ENCODE measurements at regions of chr18 and their contacts with region 1.

Region 1: DNA sequence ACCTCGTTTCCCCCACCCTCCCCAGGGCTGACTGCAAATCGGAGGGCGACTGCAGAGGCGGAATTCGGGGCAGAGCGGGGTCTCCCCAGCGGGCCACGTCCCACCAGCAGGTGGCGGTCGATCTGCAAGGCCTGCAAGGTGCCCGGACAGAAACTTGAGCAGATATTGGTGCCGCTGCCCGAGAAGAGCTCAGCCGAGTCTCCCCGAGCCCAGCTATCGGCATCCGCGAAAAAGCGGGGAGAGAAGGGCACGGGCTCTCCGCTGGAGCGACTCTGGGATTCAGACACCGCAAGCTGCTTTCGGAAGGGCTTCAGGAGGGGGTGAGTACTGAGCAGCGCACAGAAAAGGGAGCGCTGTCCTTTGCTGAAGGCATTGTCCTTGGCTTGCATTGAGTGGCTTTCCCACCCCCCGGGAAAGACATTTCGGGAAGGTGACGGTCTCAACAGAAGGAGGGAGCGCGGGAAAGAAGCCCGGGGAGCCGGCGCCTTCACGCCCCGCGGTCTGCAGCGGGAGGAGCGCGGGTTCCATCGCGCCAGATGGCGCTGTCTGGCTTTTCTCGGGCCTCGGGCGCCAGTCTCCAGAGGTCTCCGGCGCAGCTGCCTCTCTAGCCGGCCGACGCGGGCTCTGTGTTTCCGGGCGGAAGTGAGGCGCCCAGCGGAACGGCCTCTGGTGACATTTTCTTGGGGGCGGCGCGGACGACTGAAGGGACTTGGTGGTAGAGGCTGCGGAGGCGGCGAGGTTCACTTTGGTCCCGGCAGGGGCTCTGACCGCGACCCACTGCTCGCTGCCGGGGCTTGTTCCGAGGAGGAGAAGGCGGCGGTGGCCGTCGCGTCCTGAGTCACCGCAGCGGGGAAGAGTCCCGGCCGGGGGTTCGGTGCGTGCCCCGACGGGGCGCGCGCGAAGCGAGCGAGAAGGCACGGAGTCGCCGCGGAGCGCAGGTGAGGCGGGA is 69.5 kb downstream of the HAUS1 start:
- DNase-seq: peak; percentile 88 to 95 (median 90)
- H3K4me3 ChIP-seq: peak overlapping the region; percentile 96
- H3K4me3 Mint-ChIP-seq: peak overlapping the region; percentile 96 to 100 (median 99)
- H3K27ac ChIP-seq: peak overlapping the region; percentile 69
- H3K27ac Mint-ChIP-seq: peak overlapping the region; percentile 96 to 100 (median 97)
- H3K4me1 ChIP-seq: peaks cover 37% of the 10 kb centered on the region
- H3K4me1 Mint-ChIP-seq: peaks cover 30 to 44% (median 39%) of the 10 kb centered on the region in 3 donors
- H3K27me3 ChIP-seq: no peaks in the 10 kb centered on the region
- H3K27me3 Mint-ChIP-seq: peaks cover 0 to 4% of the 10 kb centered on the region in 2 donors

Region 2: DNA sequence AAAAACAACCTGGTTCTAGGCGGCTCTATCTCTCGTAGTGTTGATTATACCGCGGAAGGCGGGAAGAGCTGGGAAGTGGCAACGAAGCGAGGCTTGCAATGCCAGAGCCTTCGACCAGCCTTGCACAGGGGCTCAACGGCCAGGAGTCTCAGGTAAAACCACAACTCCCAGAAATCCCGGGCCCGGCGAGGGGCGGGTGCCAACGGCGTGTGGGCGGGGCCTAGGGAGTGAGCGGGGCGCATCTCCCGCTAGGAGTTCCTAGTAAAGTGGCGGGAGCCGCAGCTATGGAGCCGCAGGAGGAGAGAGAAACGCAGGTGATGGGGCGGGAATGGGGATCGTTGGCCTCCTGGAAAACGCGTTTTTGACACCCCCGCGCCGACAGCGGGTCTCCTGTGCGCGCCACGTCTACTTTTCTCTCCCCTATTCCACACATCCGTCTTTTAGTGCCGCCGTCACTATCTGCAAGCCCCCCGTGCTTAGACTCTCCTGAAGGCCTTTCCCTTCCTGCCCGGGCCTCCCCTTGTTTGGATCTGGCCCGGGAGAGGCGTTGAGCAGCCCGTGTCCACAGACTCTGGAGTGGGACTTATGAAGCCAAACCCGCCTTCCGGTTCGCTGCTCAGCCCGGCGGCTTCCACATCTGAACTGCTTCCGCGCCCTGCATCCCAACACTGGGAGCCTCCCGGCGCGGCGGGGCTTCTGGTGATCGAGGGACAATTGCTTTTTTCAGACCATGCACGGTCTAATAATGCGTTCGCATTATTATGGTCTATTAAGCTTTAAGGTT is 69.3 kb before region 1 on chr18 and contains the start of gene HAUS1:
- CTCF ChIA-PET with region 1: interaction called, 10 read pairs
- POLR2A ChIA-PET with region 1: no interaction called
- DNase-seq: peak; percentile 70 to 85 (median 75)
- H3K4me3 ChIP-seq: peak within 1 kb of the TSS; percentile 89
- H3K4me3 Mint-ChIP-seq: peak within 1 kb of the TSS; percentile 96 to 100 (median 99)
- H3K27ac ChIP-seq: peak within 1 kb of the TSS; percentile 68
- H3K27ac Mint-ChIP-seq: peak within 1 kb of the TSS; percentile 86 to 99 (median 96)
- H3K4me1 ChIP-seq: peaks cover 7% of the 10 kb centered on the region
- H3K4me1 Mint-ChIP-seq: peaks cover 27 to 45% (median 39%) of the 10 kb centered on the region in 3 donors
- H3K27me3 ChIP-seq: no peaks in the 10 kb centered on the region
- H3K27me3 Mint-ChIP-seq: no peaks in the 10 kb centered on the region
- total RNA-seq, gene HAUS1: 52.5 to 53.3 TPM

Region 3: GRCh38 chr18:46155641-46156051 is 18.0 kb before region 1 on chr18:
- CTCF ChIA-PET with region 1: interaction called, 41 read pairs
- POLR2A ChIA-PET with region 1: no interaction called
- DNase-seq: peak in 2 of 5 donors; percentile 30 to 61
- H3K4me3 ChIP-seq: peak overlapping the region; percentile 52
- H3K4me3 Mint-ChIP-seq: peak overlapping the region; percentile 13 to 84 (median 71)
- H3K27ac ChIP-seq: no peak overlapping the region
- H3K27ac Mint-ChIP-seq: peak overlapping the region; percentile 26 to 96 (median 88)
- H3K4me1 ChIP-seq: peaks cover 80% of the 10 kb centered on the region
- H3K4me1 Mint-ChIP-seq: peaks cover 57 to 82% (median 78%) of the 10 kb centered on the region in 3 donors
- H3K27me3 ChIP-seq: no peaks in the 10 kb centered on the region
- H3K27me3 Mint-ChIP-seq: no peaks in the 10 kb centered on the region

Region 4: DNA sequence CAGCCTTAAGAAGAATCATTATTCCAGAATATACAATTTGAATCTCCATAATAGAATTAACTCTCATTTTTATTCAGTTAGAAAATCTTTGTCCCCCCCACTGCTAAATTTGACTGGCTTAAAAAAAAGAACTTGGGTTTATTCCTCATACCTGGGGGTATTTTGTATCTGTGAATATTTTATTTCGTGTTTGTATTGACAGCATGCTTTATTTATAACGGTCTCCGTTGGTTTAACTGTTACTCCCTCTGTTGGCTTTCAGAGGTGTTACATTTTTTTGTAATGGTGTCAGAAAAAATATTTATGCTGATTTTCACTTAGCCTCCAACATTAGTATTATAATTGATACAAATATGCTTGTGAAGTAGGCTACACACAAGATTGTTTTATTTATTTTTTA is 39.6 kb after region 1 on chr18:
- CTCF ChIA-PET with region 1: interaction called, 21 read pairs
- POLR2A ChIA-PET with region 1: no interaction called
- DNase-seq: peak in 2 of 5 donors; percentile 32 to 33
- H3K4me3 ChIP-seq: no peak overlapping the region
- H3K4me3 Mint-ChIP-seq: peak overlapping the region in 4 of 7 donors; percentile 7 to 68 (median 25)
- H3K27ac ChIP-seq: no peak overlapping the region
- H3K27ac Mint-ChIP-seq: peak overlapping the region in 4 of 8 donors; percentile 37 to 64 (median 55)
- H3K4me1 ChIP-seq: peaks cover 25% of the 10 kb centered on the region
- H3K4me1 Mint-ChIP-seq: peaks cover 72 to 95% (median 90%) of the 10 kb centered on the region in 3 donors
- H3K27me3 ChIP-seq: no peaks in the 10 kb centered on the region
- H3K27me3 Mint-ChIP-seq: peaks cover 0 to 2% of the 10 kb centered on the region in 2 donors

Region 5: DNA sequence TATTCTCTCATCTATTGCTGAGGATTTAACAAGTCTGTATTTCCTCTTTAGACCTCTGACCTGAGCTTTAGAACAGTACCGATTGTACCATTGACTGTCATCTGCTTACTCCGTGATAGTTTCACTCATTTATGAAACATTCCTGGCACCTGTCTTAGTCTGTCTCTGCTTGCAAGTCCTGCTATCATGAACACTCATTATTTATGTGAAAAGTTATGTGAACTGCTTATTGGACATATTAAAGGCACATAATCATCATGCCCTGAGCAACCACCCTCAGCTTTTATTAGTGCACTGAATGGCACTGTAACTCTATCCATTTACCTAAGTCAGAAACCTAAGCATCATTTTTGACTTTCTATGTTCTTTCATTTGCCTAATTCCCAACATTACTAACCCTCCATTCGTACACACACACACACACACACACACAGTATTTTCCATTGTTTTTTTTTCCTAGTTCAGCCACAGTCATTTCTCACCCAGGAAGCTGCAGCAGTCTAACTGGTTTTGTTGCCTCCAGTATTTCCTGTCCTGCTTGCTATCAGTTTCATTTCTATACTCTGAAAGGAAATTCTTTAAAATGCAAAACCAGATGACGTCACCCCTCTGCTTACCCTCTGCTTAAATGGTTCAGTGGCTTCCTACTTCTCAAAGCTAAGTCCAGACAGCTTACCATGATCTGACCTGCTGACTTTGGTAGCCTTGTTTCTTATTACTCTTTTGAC is 76.6 kb after region 1 on chr18:
- CTCF ChIA-PET with region 1: interaction called, 13 read pairs
- POLR2A ChIA-PET with region 1: no interaction called
- DNase-seq: peak; percentile 8 to 76 (median 66)
- H3K4me3 ChIP-seq: peak overlapping the region; percentile 47
- H3K4me3 Mint-ChIP-seq: peak overlapping the region; percentile 79 to 86 (median 84)
- H3K27ac ChIP-seq: peak overlapping the region; percentile 62
- H3K27ac Mint-ChIP-seq: peak overlapping the region; percentile 90 to 100 (median 96)
- H3K4me1 ChIP-seq: peaks cover 39% of the 10 kb centered on the region
- H3K4me1 Mint-ChIP-seq: peaks cover 39 to 75% (median 63%) of the 10 kb centered on the region in 3 donors
- H3K27me3 ChIP-seq: no peaks in the 10 kb centered on the region
- H3K27me3 Mint-ChIP-seq: no peaks in the 10 kb centered on the region

Region 6: DNA sequence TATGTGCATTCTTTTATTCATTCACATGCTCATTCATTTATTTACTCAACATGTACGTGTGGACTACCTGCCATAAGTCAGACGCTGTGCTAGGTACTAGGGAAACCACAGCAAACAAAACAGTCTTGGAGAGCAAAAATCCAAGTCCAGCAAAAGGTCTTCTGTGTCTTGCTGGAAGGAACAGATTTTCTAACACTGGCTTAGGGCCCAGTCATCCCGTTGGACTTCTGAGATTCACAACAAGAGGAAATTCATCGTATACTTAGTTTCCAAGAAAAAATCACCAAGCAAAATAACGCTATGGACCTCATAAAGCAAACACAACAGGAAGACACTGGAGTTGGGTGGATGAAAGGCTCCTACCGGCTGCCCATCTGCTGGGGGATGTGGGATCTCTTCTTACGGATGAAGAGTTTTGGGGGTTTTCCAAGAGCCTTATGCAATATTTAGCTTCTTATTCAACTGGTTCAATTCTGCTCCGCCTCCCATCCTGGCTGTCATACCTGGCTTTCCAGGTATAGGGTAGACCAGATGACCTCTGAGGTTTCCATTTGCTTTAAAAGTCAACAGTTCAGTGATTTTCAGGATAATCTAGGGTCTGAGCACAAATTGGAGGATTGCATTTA is 193.2 kb after region 1 on chr18:
- CTCF ChIA-PET with region 1: no interaction called
- POLR2A ChIA-PET with region 1: no interaction called
- DNase-seq: no peak
- H3K4me3 ChIP-seq: no peak overlapping the region
- H3K4me3 Mint-ChIP-seq: no peak overlapping the region
- H3K27ac ChIP-seq: no peak overlapping the region
- H3K27ac Mint-ChIP-seq: no peak overlapping the region
- H3K4me1 ChIP-seq: no peaks in the 10 kb centered on the region
- H3K4me1 Mint-ChIP-seq: no peaks in the 10 kb centered on the region
- H3K27me3 ChIP-seq: no peaks in the 10 kb centered on the region
- H3K27me3 Mint-ChIP-seq: no peaks in the 10 kb centered on the region

Region 7: DNA sequence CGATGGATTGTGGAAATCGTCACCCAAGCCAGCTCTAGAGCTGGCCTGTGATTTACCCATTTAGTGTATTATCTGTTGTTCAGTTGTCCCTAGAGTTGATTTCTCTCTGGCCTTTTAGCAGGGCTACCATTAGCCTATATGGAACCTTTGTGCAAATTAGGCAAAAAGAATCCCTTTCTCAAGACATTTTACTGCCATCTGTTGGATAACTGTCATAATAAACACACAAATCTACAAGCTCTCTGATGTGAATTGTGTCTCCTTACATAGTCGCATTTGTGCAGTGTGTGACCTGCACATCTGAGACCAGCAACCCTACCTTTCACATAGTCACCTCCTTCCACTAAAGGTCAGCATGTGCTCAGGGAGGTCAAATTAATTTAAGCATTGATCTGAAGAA is 449.3 kb after region 1 on chr18:
- CTCF ChIA-PET with region 1: interaction called, 16 read pairs
- POLR2A ChIA-PET with region 1: interaction called, 3 read pairs
- DNase-seq: no peak
- H3K4me3 ChIP-seq: peak overlapping the region; percentile 24
- H3K4me3 Mint-ChIP-seq: peak overlapping the region in 2 of 7 donors; percentile 61 to 71
- H3K27ac ChIP-seq: no peak overlapping the region
- H3K27ac Mint-ChIP-seq: peak overlapping the region in 6 of 8 donors; percentile 3 to 92 (median 52)
- H3K4me1 ChIP-seq: peaks cover 25% of the 10 kb centered on the region
- H3K4me1 Mint-ChIP-seq: peaks cover 37 to 38% (median 38%) of the 10 kb centered on the region in 3 donors
- H3K27me3 ChIP-seq: no peaks in the 10 kb centered on the region
- H3K27me3 Mint-ChIP-seq: peaks cover 4 to 10% of the 10 kb centered on the region in 2 donors